Mammary epithelial cell (primary cell): ENCODE measurements at regions of chr6 and their contacts with region 1.

Region 1: GRCh38 chr6:26457806-26458688 is at the start of gene BTN2A1:
- DNase-seq: peak; percentile 88
- H3K4me3 ChIP-seq: peak within 1 kb of the TSS; percentile 85 to 97 (median 86)
- H3K27ac ChIP-seq: peak within 1 kb of the TSS; percentile 91
- H3K4me1 ChIP-seq: peaks cover 8% of the 10 kb centered on the region
- H3K27me3 ChIP-seq: no peaks in the 10 kb centered on the region
- CTCF ChIP-seq: no peak
- total RNA-seq, gene BTN2A1: 7.8 to 19.2 TPM

Region 2: DNA sequence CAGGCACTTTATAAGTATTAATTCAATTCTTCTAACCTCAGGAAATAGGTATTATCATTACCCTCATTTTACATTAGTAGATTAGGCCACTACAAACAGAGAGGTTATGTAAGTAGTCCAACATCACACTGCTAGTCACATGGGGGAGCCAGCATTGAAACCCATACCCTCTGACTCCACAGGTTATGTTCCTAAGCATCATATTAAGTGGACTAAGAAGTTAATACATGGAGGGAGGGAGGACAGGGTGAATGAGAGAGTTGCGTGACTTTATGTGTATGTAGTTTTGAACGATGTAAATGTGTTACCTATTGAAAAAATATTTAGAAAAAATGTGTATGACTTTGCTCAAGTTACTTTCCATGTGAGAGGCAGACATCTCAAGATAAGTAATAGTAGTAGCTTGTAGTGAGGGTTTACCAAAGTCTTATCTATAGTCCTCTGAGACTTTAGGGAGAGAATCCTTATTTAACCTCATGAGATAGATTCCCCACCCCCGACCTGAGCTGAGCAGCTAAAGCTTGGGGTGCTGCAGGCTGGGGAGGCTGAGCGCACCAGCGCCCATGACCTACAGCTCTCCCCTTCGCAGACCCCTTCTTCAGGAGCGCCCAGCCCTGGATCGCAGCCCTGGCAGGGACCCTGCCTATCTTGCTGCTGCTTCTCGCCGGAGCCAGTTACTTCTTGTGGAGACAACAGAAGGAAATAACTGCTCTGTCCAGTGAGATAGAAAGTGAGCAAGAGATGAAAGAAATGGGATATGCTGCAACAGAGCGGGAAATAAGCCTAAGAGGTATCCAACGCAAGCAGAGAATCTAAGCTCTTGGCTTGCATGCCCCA is 85.5 kb before region 1 on chr6:
- CTCF ChIA-PET with region 1: no interaction called
- dilution Hi-C with region 1: loop called (anchors 5 kb)
- in situ Hi-C with region 1: no loop called
- intact Hi-C with region 1: no loop called
- DNase-seq: no peak
- H3K4me3 ChIP-seq: no peak overlapping the region
- H3K27ac ChIP-seq: no peak overlapping the region
- H3K4me1 ChIP-seq: no peaks in the 10 kb centered on the region
- H3K27me3 ChIP-seq: no peaks in the 10 kb centered on the region
- CTCF ChIP-seq: no peak

Region 3: GRCh38 chr6:26401987-26402658 is 55.9 kb before region 1 on chr6 and contains the start of gene BTN3A1:
- CTCF ChIA-PET with region 1: no interaction called
- dilution Hi-C with region 1: no loop called
- in situ Hi-C with region 1: no loop called
- intact Hi-C with region 1: loop called (anchors 2 kb)
- DNase-seq: peak; percentile 77
- H3K4me3 ChIP-seq: peak within 1 kb of the TSS; percentile 63 to 78 (median 68)
- H3K27ac ChIP-seq: peak within 1 kb of the TSS; percentile 76
- H3K4me1 ChIP-seq: no peaks in the 10 kb centered on the region
- H3K27me3 ChIP-seq: no peaks in the 10 kb centered on the region
- CTCF ChIP-seq: no peak
- total RNA-seq, gene BTN3A1: 5.1 to 7.3 TPM

Region 4: DNA sequence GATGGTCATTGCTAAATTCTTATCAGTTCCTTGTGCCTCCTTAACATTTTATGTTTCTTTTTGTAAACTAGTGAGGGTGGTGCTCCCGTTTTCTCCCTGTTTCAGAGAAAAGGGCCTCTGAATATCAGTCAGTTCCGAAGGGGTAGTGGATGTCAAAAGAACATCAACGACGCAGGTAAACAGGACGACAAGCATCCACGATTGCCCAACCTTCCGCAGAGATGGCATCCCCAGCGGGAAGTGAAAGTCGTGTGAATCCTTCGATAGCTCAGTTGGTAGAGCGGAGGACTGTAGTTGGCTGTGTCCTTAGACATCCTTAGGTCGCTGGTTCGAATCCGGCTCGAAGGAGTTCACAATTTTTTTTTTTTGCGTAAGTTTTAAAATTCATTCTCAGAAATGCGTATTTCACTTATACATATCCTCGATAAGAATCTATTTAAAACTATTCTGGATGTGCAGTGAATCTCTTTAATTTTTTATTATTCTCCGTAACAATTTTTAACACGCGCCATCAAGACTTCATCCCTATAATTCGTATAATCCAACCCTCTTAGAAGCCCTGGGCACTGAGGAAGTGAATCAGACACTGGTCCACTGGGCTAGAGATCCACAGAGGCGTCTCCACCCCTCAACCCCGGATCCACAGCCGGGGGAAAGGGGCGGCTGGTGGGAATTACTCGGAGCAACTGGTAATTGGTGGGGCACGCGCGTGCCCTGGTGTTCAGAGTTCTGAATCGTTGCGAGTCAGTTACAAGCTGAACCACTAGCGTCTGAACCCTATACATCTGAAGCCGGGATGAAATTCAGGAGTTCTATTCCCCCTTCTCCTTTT is 110.8 kb after region 1 on chr6:
- CTCF ChIA-PET with region 1: no interaction called
- dilution Hi-C with region 1: no loop called
- in situ Hi-C with region 1: no loop called
- intact Hi-C with region 1: no loop called
- DNase-seq: peak; percentile 85
- H3K4me3 ChIP-seq: peak overlapping the region; percentile 62 to 73 (median 71)
- H3K27ac ChIP-seq: no peak overlapping the region
- H3K4me1 ChIP-seq: no peaks in the 10 kb centered on the region
- H3K27me3 ChIP-seq: no peaks in the 10 kb centered on the region
- CTCF ChIP-seq: peak in 1 of 2 donors; percentile 27

Region 5: DNA sequence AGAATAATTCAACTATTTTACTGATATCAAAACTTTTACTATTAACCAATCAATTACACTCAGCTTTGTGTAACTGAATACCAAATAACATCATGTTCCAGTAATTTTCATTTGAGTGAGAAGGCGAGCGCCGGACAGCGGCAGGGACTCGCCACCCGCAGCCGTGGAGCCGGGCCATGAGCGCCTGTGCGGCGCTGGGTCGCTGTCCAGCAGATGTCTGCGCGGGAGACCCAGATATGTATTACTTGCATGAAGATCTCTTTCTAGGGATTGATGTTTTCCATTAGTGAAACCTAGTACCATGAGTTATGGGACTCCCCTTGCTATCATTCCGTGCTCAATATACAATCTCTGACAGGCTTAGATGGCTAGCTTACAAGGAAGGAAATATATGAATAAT is 544.4 kb after region 1 on chr6:
- CTCF ChIA-PET with region 1: no interaction called
- dilution Hi-C with region 1: no loop called
- in situ Hi-C with region 1: no loop called
- intact Hi-C with region 1: no loop called
- DNase-seq: no peak
- H3K4me3 ChIP-seq: no peak overlapping the region
- H3K27ac ChIP-seq: no peak overlapping the region
- H3K4me1 ChIP-seq: no peaks in the 10 kb centered on the region
- H3K27me3 ChIP-seq: no peaks in the 10 kb centered on the region
- CTCF ChIP-seq: no peak